Activated CD8-positive, alpha-beta memory T cell treated with anti-CD3 and anti-CD28 coated beads, Interleukin-2, amount 10 ng/mL, durations not matched to agents 7 days and 5 days (primary cell): ENCODE measurements at regions of chr2 and their contacts with region 1.

Region 1: DNA sequence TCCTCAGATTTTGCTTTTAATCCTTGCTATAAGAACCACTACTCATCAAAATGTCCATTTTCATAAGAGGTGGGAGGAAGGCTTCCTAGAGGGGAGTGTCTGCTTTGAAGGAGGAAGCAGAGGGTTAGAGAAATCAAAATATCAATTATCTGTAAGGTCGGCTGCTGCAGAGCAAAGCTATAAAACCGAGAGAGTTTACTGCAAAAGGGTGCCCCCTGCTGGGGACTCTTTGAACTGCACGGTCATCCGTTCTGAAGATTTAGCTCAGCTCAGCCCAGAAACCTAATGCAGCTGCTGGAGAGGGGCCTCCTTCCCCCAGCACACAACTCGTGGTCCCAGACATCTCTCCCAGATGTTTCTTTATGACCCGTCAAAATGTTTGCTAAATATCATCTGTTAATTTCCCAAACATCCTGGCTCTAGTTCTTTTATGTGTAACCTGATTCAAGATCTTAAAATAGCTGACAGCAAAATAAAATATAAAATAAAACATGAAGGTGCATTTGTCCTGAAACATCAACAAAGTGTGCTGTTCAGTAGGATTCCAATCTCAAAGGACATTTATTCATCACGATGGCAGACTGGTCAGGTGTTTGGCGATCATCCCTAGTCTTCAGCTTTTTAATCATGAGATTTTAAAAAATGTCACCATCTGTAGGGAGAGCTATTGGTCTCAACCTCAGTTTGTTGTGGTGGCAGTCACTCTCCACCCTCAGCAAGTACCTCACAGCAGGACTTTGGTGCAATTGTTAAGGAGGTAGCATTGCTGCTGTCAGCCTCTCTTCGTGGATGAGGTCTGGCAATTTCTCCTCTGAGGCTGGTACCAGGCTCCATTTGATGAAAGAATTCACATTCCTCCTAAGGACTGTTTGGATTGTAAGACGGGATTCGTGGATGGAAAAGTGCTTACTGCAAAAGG is 185.9 kb downstream of the MTX2 start:
- DNase-seq: peak; percentile 83
- ATAC-seq: peak; percentile 72
- H3K4me3 Mint-ChIP-seq: no peak overlapping the region
- H3K27ac Mint-ChIP-seq: no peak overlapping the region
- H3K4me1 Mint-ChIP-seq: peaks cover 1% of the 10 kb centered on the region
- H3K27me3 Mint-ChIP-seq: peaks cover 40% of the 10 kb centered on the region

Region 2: GRCh38 chr2:176132205-176133171 is 322.7 kb before region 1 on chr2:
- CTCF ChIA-PET with region 1: interaction called, 24 read pairs
- DNase-seq: no peak
- ATAC-seq: no peak
- H3K4me3 Mint-ChIP-seq: peak overlapping the region; percentile 61
- H3K27ac Mint-ChIP-seq: no peak overlapping the region
- H3K4me1 Mint-ChIP-seq: peaks cover 15% of the 10 kb centered on the region
- H3K27me3 Mint-ChIP-seq: peaks cover 88% of the 10 kb centered on the region

Region 3: DNA sequence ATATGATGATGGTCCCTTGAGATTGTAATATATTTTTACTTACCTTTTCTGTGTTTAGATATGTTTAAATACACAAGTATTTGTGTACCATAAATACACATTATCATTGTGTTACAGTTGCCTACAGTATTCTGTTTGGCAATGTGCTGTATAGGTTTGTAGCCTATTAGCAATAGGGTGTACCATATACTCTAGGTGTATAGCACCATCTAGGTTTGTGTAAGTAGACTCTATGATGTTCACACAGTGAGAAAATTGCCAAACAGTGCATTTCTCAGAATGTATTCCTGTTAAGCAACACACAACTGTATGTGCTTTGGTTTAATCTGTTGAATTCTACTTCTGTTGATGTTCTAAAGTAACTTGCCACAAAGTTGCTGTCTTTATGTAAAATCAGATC is 121.5 kb before region 1 on chr2:
- CTCF ChIA-PET with region 1: no interaction called
- DNase-seq: no peak
- ATAC-seq: no peak
- H3K4me3 Mint-ChIP-seq: no peak overlapping the region
- H3K27ac Mint-ChIP-seq: no peak overlapping the region
- H3K4me1 Mint-ChIP-seq: no peaks in the 10 kb centered on the region
- H3K27me3 Mint-ChIP-seq: no peaks in the 10 kb centered on the region